ENCODE measurements at regions of chr12 and their contacts with region 1.

Region 1: DNA sequence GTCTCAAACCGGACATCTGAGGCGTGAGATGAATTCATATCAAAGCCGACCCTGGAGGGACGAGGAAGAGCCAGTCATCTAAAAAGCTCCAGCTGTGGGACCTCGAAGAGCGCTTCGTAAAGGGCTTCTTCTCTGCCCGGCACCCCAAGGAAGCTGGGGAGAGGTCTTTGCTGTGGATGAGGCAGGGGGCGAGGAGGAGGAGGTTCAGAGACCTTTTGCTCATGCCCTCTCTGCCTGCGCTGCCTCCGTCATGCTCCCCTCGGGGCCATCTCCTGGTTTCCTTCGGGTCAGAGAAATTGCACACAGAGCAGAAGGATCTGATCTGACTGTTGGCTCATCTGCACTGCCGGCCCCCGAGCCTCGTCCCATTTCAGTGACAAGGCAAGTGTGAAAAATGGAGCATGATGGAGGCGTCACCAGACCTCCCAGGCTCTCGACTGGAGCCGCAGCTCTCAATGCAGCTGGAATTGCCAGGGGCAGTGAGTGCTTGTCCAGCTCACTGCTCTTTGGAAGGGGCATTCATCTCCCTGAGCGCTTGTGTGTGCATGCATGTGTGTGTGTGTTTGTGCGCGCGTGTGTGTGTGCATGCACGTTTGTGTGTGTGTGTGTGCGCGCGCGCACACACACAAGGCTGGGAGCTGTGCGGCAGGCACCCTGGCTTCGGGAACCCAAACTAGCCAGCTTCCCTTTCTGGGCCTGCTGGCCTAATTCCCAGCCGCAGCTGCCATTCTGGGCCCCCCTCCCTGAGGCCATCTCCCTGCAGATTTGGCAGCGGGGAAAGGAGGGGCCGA is 9.2 kb downstream of the CABP1 start:
- DNase-seq: no peak
- ATAC-seq: no peak
- H3K4me3 ChIP-seq: peak overlapping the region in 1 of 5 experiments; percentile 37
- H3K4me3 Mint-ChIP-seq: peak overlapping the region; percentile 76
- H3K27ac ChIP-seq: no peak overlapping the region
- H3K27ac Mint-ChIP-seq: no peak overlapping the region
- H3K4me1 ChIP-seq: peaks cover 16 to 23% of the 10 kb centered on the region in 2 donors
- H3K4me1 Mint-ChIP-seq: peaks cover 22% of the 10 kb centered on the region
- H3K27me3 ChIP-seq: peaks cover 0 to 52% (median 18%) of the 10 kb centered on the region in 4 experiments
- H3K27me3 Mint-ChIP-seq: peaks cover 51% of the 10 kb centered on the region
- CTCF ChIP-seq: peak; percentile 52

Region 2: GRCh38 chr12:120327593-120327992 is 322.0 kb before region 1 on chr12 and contains the start of gene PLA2G1B:
- CTCF ChIA-PET with region 1: no interaction called
- POLR2A ChIA-PET with region 1: no interaction called
- intact Hi-C with region 1: loop called (anchors 5 kb)
- DNase-seq: no peak
- ATAC-seq: no peak
- H3K4me3 ChIP-seq: no peak within 1 kb of the TSS
- H3K4me3 Mint-ChIP-seq: no peak within 1 kb of the TSS
- H3K27ac ChIP-seq: no peak within 1 kb of the TSS
- H3K27ac Mint-ChIP-seq: no peak within 1 kb of the TSS
- H3K4me1 ChIP-seq: peaks cover 0 to 9% of the 10 kb centered on the region in 2 donors
- H3K4me1 Mint-ChIP-seq: peaks cover 7% of the 10 kb centered on the region
- H3K27me3 ChIP-seq: peaks cover 0 to 10% (median 2%) of the 10 kb centered on the region in 4 experiments
- H3K27me3 Mint-ChIP-seq: peaks cover 17% of the 10 kb centered on the region
- CTCF ChIP-seq: no peak
- total RNA-seq, gene PLA2G1B: not detected in 2 replicates

Region 3: GRCh38 chr12:120662879-120663278 is 13.2 kb after region 1 on chr12:
- CTCF ChIA-PET with region 1: interaction called, 204 read pairs
- POLR2A ChIA-PET with region 1: no interaction called
- intact Hi-C with region 1: loop called (anchors 2 kb)
- DNase-seq: peak; percentile 85
- ATAC-seq: peak; percentile 95
- H3K4me3 ChIP-seq: no peak overlapping the region
- H3K4me3 Mint-ChIP-seq: peak overlapping the region; percentile 6
- H3K27ac ChIP-seq: no peak overlapping the region
- H3K27ac Mint-ChIP-seq: peak overlapping the region; percentile 61
- H3K4me1 ChIP-seq: peaks cover 30 to 38% of the 10 kb centered on the region in 2 donors
- H3K4me1 Mint-ChIP-seq: peaks cover 20% of the 10 kb centered on the region
- H3K27me3 ChIP-seq: peaks cover 0 to 14% (median 0%) of the 10 kb centered on the region in 4 experiments
- H3K27me3 Mint-ChIP-seq: peaks cover 6% of the 10 kb centered on the region
- CTCF ChIP-seq: no peak

Region 4: DNA sequence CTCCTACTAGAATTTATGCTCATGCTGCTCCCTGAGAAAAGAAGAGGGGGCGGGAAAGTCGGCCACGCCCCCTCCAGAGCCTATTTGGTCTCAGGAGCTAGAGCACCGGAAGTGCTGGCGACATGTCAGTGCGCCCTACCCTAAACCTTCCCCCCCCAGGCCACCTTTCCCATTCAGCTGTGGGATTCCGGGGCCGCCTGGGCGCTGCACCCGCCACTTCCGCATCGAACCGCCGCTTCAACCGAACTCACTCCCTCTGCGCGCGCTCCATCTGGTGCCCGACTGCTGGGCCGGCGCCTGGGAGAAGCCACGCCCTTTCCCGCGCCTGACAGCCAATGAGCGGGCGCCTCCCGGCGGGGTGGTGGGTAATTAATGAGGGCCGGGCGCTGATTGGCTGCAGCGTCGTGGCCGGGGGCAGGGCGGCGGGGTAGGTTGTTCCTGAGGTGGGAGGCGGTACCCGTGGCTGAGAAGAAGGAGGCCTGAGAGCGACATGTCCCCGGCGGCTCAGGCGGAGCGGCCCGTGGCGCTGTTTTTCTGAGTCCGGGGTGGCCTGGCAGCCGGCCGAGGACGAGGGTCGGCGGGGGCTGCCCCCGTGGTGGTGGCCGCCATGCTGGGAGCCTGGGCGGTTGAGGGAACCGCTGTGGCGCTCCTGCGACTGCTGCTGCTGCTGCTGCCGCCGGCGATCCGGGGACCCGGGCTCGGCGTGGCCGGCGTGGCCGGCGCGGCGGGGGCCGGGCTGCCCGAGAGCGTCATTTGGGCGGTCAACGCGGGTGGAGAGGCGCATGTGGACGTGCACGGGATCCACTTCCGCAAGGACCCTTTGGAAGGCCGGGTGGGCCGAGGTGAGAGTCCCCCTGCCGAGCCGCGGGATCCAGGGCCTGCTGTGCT is 37.3 kb after region 1 on chr12 and contains the start of gene MLEC:
- CTCF ChIA-PET with region 1: interaction called, 121 read pairs
- POLR2A ChIA-PET with region 1: interaction called, 3 read pairs
- intact Hi-C with region 1: loop called (anchors 1 kb)
- DNase-seq: no peak
- ATAC-seq: peak; percentile 77
- H3K4me3 ChIP-seq: peak within 1 kb of the TSS; percentile 78 to 91 (median 81)
- H3K4me3 Mint-ChIP-seq: peak within 1 kb of the TSS; percentile 93
- H3K27ac ChIP-seq: peak within 1 kb of the TSS; percentile 84 to 87
- H3K27ac Mint-ChIP-seq: peak within 1 kb of the TSS; percentile 96
- H3K4me1 ChIP-seq: peaks cover 41 to 46% of the 10 kb centered on the region in 2 donors
- H3K4me1 Mint-ChIP-seq: peaks cover 49% of the 10 kb centered on the region
- H3K27me3 ChIP-seq: no peaks in the 10 kb centered on the region
- H3K27me3 Mint-ChIP-seq: no peaks in the 10 kb centered on the region
- CTCF ChIP-seq: no peak
- total RNA-seq, gene MLEC: 39.8 and 52.6 TPM in 2 replicates

Region 5: GRCh38 chr12:120710031-120710804 is 60.6 kb after region 1 on chr12 and contains the start of gene UNC119B:
- CTCF ChIA-PET with region 1: interaction called, 172 read pairs
- POLR2A ChIA-PET with region 1: no interaction called
- intact Hi-C with region 1: loop called (anchors 1 kb)
- DNase-seq: peak; percentile 80
- ATAC-seq: peak; percentile 88
- H3K4me3 ChIP-seq: peak within 1 kb of the TSS; percentile 27 to 89 (median 68)
- H3K4me3 Mint-ChIP-seq: peak within 1 kb of the TSS; percentile 91
- H3K27ac ChIP-seq: peak within 1 kb of the TSS in 1 of 2 donors; percentile 71
- H3K27ac Mint-ChIP-seq: peak within 1 kb of the TSS; percentile 79
- H3K4me1 ChIP-seq: peaks cover 17 to 26% of the 10 kb centered on the region in 2 donors
- H3K4me1 Mint-ChIP-seq: peaks cover 24% of the 10 kb centered on the region
- H3K27me3 ChIP-seq: no peaks in the 10 kb centered on the region
- H3K27me3 Mint-ChIP-seq: no peaks in the 10 kb centered on the region
- CTCF ChIP-seq: no peak
- total RNA-seq, gene UNC119B: 19.2 and 22.7 TPM in 2 replicates

Region 6: DNA sequence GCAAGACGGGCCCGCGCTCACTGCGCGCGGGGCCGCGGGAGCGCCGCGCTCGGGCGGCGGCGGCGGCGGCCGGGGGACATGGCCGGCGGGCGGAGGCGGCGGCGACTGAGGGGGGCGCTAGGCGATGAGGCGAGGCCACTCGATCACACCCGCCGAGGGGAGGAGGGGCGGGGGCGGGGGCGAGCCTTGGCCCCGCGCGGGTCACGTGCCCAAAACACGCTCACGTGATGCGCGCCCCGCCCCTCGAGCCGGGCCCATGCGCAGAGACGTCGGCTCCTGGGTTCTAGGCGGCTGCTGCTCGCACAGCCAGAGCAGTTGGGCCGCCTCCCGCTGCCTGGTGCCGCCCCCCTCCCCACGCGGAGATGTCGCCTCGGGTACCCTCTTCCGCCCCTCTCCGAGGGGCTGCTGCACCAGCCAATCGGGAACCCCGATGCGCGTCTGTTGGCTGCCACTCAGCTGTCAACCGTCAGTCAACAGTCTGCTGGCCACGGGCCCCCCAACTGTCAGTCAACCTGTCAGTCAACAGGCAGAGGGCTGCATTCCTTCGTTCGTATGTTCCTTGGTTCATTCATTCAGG is 254.6 kb after region 1 on chr12 and contains the start of gene SPPL3:
- CTCF ChIA-PET with region 1: no interaction called
- POLR2A ChIA-PET with region 1: no interaction called
- intact Hi-C with region 1: loop called (anchors 5 kb)
- DNase-seq: peak; percentile 94
- ATAC-seq: peak; percentile 83
- H3K4me3 ChIP-seq: peak within 1 kb of the TSS; percentile 32 to 85 (median 75)
- H3K4me3 Mint-ChIP-seq: peak within 1 kb of the TSS; percentile 97
- H3K27ac ChIP-seq: peak within 1 kb of the TSS; percentile 54 to 80
- H3K27ac Mint-ChIP-seq: peak within 1 kb of the TSS; percentile 95
- H3K4me1 ChIP-seq: peaks cover 19 to 24% of the 10 kb centered on the region in 2 donors
- H3K4me1 Mint-ChIP-seq: peaks cover 29% of the 10 kb centered on the region
- H3K27me3 ChIP-seq: no peaks in the 10 kb centered on the region
- H3K27me3 Mint-ChIP-seq: no peaks in the 10 kb centered on the region
- CTCF ChIP-seq: no peak
- total RNA-seq, gene SPPL3: 43.6 and 53.7 TPM in 2 replicates

Region 7: GRCh38 chr12:121095544-121096198 is 446.0 kb after region 1 on chr12:
- CTCF ChIA-PET with region 1: interaction called, 3 read pairs
- POLR2A ChIA-PET with region 1: interaction called, 4 read pairs
- intact Hi-C with region 1: loop called (anchors 5 kb)
- DNase-seq: peak; percentile 86
- ATAC-seq: peak; percentile 97
- H3K4me3 ChIP-seq: peak overlapping the region in 4 of 5 experiments; percentile 31 to 59 (median 48)
- H3K4me3 Mint-ChIP-seq: peak overlapping the region; percentile 87
- H3K27ac ChIP-seq: no peak overlapping the region
- H3K27ac Mint-ChIP-seq: peak overlapping the region; percentile 5
- H3K4me1 ChIP-seq: peaks cover 15 to 20% of the 10 kb centered on the region in 2 donors
- H3K4me1 Mint-ChIP-seq: peaks cover 26% of the 10 kb centered on the region
- H3K27me3 ChIP-seq: peaks cover 0 to 5% (median 0%) of the 10 kb centered on the region in 4 experiments
- H3K27me3 Mint-ChIP-seq: peaks cover 13% of the 10 kb centered on the region
- CTCF ChIP-seq: peak; percentile 92

Region 8: DNA sequence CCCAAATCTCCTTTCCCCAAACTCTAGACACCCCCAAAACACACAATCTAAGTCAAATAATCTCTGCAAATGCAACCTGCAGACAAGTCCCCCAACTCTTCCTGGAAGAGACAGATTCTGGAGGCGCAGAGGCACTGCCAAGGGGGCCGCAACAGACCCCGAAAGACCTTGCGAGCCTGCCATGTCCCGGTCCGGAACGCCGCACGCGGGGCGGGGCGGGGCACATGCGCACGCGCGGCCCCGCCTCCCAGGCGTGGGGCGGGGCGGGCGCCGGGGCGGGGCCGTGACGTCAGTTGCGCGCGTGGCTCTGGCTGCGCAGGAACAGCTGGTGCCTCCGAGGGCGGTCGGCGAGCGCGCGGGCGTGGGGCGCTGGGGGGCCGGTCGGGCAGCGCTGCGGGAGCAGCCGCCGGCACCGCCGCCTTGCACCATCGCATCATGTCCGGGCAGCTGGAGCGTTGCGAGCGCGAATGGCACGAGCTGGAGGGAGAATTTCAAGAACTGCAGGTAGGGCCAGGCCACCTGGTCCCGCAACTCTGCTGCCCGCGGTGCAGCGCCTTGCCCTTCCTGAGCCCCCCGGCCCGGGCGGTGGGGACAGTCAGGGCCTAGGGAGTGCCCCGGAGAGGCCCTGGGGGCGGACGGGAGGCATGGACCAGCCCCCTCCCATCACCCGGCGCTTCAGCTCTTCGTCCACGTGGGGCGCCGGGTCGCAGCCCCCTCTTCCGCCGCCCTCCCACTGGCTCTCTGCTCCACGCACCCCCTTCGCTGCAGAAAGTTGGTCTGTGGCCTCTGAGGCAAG is 1063.0 kb after region 1 on chr12 and contains the start of gene TMEM120B:
- CTCF ChIA-PET with region 1: no interaction called
- POLR2A ChIA-PET with region 1: no interaction called
- intact Hi-C with region 1: no loop called
- DNase-seq: peak; percentile 93
- ATAC-seq: peak; percentile 92
- H3K4me3 ChIP-seq: peak within 1 kb of the TSS; percentile 84 to 97 (median 89)
- H3K4me3 Mint-ChIP-seq: peak within 1 kb of the TSS; percentile 92
- H3K27ac ChIP-seq: peak within 1 kb of the TSS; percentile 48 to 63
- H3K27ac Mint-ChIP-seq: peak within 1 kb of the TSS; percentile 89
- H3K4me1 ChIP-seq: peaks cover 22 to 28% of the 10 kb centered on the region in 2 donors
- H3K4me1 Mint-ChIP-seq: peaks cover 25% of the 10 kb centered on the region
- H3K27me3 ChIP-seq: no peaks in the 10 kb centered on the region
- H3K27me3 Mint-ChIP-seq: no peaks in the 10 kb centered on the region
- CTCF ChIP-seq: no peak
- total RNA-seq, gene TMEM120B: 9.2 and 11.5 TPM in 2 replicates